T-cell (primary cell): ENCODE measurements at regions of chr13 and their contacts with region 1.

Region 1: GRCh38 chr13:24982333-24982999 is 113.5 kb upstream of the PABPC3 start:
- DNase-seq: no peak
- ATAC-seq: no peak
- H3K4me3 ChIP-seq: no peak overlapping the region
- H3K4me3 Mint-ChIP-seq: no peak overlapping the region
- H3K27ac ChIP-seq: no peak overlapping the region
- H3K27ac Mint-ChIP-seq: no peak overlapping the region
- H3K4me1 ChIP-seq: no peaks in the 10 kb centered on the region
- H3K4me1 Mint-ChIP-seq: no peaks in the 10 kb centered on the region
- H3K27me3 ChIP-seq: peaks cover 0 to 35% of the 10 kb centered on the region in 2 experiments
- H3K27me3 Mint-ChIP-seq: peaks cover 36 to 42% of the 10 kb centered on the region in 2 donors

Region 2: GRCh38 chr13:24931450-24932251 is 50.8 kb before region 1 on chr13:
- CTCF ChIA-PET with region 1: no interaction called
- POLR2A ChIA-PET with region 1: interaction called in 1 of 2 experiments, 12 read pairs
- DNase-seq: no peak
- ATAC-seq: no peak
- H3K4me3 ChIP-seq: no peak overlapping the region
- H3K4me3 Mint-ChIP-seq: no peak overlapping the region
- H3K27ac ChIP-seq: no peak overlapping the region
- H3K27ac Mint-ChIP-seq: no peak overlapping the region
- H3K4me1 ChIP-seq: peaks cover 0 to 4% of the 10 kb centered on the region in 2 experiments
- H3K4me1 Mint-ChIP-seq: no peaks in the 10 kb centered on the region
- H3K27me3 ChIP-seq: peaks cover 9 to 21% of the 10 kb centered on the region in 2 experiments
- H3K27me3 Mint-ChIP-seq: peaks cover 44 to 47% of the 10 kb centered on the region in 2 donors

Region 3: DNA sequence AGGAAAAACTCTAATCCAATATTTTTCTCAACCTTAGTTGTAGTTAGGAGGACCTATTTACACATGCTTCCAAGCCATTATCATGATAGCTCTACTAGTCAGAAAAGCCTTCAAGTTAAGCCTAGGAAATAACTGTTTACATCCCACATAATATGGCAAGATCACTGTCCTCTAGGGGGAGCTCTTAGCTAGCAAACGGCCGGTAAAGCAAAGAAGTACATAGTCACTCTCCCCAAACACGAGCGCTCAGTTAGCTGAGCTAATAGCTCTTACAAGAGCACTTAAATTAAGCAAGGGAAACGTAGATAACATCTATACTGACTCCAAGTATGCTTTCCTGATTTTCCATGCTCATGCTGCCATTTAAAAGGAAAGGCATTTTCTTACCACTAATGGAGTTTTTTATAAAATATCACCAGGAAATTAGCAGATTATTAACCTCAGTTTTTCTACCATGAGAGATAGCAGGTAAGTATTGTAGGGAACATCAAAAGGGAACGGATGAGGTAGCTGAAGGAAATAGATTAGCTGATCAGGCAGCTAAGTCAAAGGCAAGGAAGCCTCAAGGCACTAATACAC is 12.8 kb after region 1 on chr13:
- CTCF ChIA-PET with region 1: interaction called, 4 to 11 read pairs
- POLR2A ChIA-PET with region 1: no interaction called
- DNase-seq: peak in 32 of 35 experiments; percentile 9 to 78 (median 38)
- ATAC-seq: peak; percentile 71 to 81 (median 78)
- H3K4me3 ChIP-seq: no peak overlapping the region
- H3K4me3 Mint-ChIP-seq: no peak overlapping the region
- H3K27ac ChIP-seq: no peak overlapping the region
- H3K27ac Mint-ChIP-seq: no peak overlapping the region
- H3K4me1 ChIP-seq: no peaks in the 10 kb centered on the region
- H3K4me1 Mint-ChIP-seq: peaks cover 4 to 6% (median 5%) of the 10 kb centered on the region in 3 donors
- H3K27me3 ChIP-seq: peaks cover 2% of the 10 kb centered on the region in 2 experiments
- H3K27me3 Mint-ChIP-seq: peaks cover 19 to 36% of the 10 kb centered on the region in 2 donors

Region 4: GRCh38 chr13:25080773-25081172 is 98.3 kb after region 1 on chr13:
- CTCF ChIA-PET with region 1: no interaction called
- POLR2A ChIA-PET with region 1: no interaction called
- DNase-seq: no peak
- ATAC-seq: no peak
- H3K4me3 ChIP-seq: no peak overlapping the region
- H3K4me3 Mint-ChIP-seq: no peak overlapping the region
- H3K27ac ChIP-seq: no peak overlapping the region
- H3K27ac Mint-ChIP-seq: no peak overlapping the region
- H3K4me1 ChIP-seq: no peaks in the 10 kb centered on the region
- H3K4me1 Mint-ChIP-seq: peaks cover 0 to 2% (median 0%) of the 10 kb centered on the region in 3 donors
- H3K27me3 ChIP-seq: no peaks in the 10 kb centered on the region
- H3K27me3 Mint-ChIP-seq: peaks cover 6 to 12% of the 10 kb centered on the region in 2 donors